Activated CD8-positive, alpha-beta T cell treated with anti-CD3 and anti-CD28 coated beads for 36 hours (primary cell): ENCODE measurements at regions of chr6 and their contacts with region 1.

Region 1: GRCh38 chr6:33276864-33277662 is at the start of gene B3GALT4:
- DNase-seq: peak; percentile 82
- ATAC-seq: peak; percentile 76
- H3K4me3 Mint-ChIP-seq: peak within 1 kb of the TSS; percentile 95
- H3K27ac Mint-ChIP-seq: peak within 1 kb of the TSS; percentile 100
- H3K4me1 Mint-ChIP-seq: peaks cover 38% of the 10 kb centered on the region
- H3K27me3 Mint-ChIP-seq: no peaks in the 10 kb centered on the region
- CTCF ChIP-seq: peak; percentile 44
- total RNA-seq, gene B3GALT4: 3.6 to 4.2 TPM

Region 2: DNA sequence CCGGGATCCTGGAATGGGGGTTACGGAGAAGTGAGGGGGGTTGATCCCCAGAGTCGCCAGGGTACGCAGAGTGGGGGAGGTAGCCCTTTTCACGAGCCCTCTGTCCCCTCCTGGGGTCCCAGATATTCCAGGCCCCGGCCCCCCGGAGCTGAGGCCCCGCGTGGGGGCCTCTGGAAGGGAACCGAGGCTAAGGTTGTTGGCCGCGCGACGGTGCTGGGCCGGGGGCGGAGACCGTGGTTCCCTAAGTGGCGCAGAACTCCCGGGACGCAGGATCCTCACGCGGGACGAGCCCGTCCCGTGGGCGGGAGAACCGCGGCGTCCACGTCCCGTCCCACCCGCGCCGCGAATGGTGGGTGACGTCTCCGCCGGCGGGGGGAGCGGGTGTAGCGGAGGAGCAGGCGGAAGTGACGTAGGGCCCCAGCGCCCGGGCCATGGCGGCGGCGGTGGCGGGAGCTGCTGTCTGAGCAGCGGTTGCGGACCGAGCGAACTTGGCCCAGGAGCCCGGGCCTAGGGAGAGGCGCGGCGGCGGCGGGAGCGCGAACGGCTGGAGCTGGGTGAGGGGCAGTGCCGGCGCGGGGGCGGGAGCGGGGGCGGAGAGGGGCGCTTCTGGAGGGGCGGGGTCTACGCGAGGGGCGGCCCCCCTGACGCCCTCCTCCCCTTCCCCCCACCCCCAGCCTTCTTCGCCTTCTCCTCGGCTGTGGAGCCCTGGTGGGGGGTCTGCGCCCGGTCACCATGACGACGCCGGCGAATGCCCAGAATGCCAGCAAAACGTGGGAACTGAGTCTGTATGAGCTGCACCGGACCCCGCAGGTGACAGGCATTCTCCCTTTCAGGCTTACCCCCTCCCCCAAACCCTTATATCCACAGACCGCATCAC is 68.7 kb before region 1 on chr6 and contains the start of gene RING1:
- CTCF ChIA-PET with region 1: interaction called, 4 read pairs
- POLR2A ChIA-PET with region 1: interaction called, 21 read pairs
- intact Hi-C with region 1: no loop called
- DNase-seq: peak; percentile 89
- ATAC-seq: peak; percentile 24
- H3K4me3 Mint-ChIP-seq: peak within 1 kb of the TSS; percentile 77
- H3K27ac Mint-ChIP-seq: peak within 1 kb of the TSS; percentile 94
- H3K4me1 Mint-ChIP-seq: peaks cover 63% of the 10 kb centered on the region
- H3K27me3 Mint-ChIP-seq: no peaks in the 10 kb centered on the region
- CTCF ChIP-seq: no peak
- total RNA-seq, gene RING1: 26.8 to 27.5 TPM

Region 3: GRCh38 chr6:33288921-33289748 is 12.1 kb after region 1 on chr6 and contains the starts of genes PFDN6 and WDR46:
- CTCF ChIA-PET with region 1: interaction called, 35 read pairs
- POLR2A ChIA-PET with region 1: interaction called, 261 read pairs
- intact Hi-C with region 1: no loop called
- DNase-seq: peak; percentile 91
- ATAC-seq: peak; percentile 98
- H3K4me3 Mint-ChIP-seq: peak within 1 kb of the TSS; percentile 89
- H3K27ac Mint-ChIP-seq: peak within 1 kb of the TSS; percentile 89
- H3K4me1 Mint-ChIP-seq: peaks cover 33% of the 10 kb centered on the region
- H3K27me3 Mint-ChIP-seq: no peaks in the 10 kb centered on the region
- CTCF ChIP-seq: no peak
- total RNA-seq, gene PFDN6: 78.1 to 92.3 TPM
- total RNA-seq, gene WDR46: 64.0 to 72.2 TPM

Region 4: DNA sequence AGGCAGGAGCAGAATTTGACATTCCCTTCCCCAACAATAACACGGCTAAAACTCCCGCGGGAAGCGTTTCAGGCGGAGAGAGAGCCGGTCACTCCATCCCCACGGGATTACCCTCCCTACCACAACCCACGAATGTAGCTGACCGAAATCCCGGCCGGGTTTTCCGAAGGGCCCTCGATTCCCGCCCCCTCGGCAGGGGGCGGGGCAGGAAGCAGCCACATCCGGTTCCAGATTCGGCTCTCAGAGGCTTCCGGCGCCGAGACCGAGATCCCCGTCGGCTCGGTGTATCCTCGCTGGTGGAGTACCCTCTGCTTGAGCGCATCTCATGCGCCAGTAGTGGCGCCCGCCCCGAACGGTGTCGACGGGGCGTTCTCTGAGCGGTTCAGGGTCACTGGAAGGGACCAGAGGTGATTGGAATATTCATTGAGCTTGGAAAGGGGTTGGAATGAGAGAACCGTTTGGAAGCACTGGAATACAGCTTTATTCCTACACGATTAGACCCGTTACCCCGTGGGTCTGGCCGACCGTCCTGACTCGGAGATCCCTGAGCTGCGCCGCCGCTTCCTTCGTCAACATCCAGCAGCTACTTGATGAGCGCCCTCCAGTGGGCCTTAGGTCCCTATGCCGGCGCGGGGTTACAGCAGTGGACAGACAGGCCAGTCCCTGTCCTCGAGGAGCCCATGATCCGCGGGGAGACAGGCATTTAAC is 22.3 kb after region 1 on chr6:
- CTCF ChIA-PET with region 1: interaction called, 11 read pairs
- POLR2A ChIA-PET with region 1: interaction called, 261 read pairs
- intact Hi-C with region 1: no loop called
- DNase-seq: peak; percentile 96
- ATAC-seq: peak; percentile 86
- H3K4me3 Mint-ChIP-seq: peak overlapping the region; percentile 97
- H3K27ac Mint-ChIP-seq: peak overlapping the region; percentile 99
- H3K4me1 Mint-ChIP-seq: peaks cover 33% of the 10 kb centered on the region
- H3K27me3 Mint-ChIP-seq: no peaks in the 10 kb centered on the region
- CTCF ChIP-seq: peak; percentile 74

Region 5: DNA sequence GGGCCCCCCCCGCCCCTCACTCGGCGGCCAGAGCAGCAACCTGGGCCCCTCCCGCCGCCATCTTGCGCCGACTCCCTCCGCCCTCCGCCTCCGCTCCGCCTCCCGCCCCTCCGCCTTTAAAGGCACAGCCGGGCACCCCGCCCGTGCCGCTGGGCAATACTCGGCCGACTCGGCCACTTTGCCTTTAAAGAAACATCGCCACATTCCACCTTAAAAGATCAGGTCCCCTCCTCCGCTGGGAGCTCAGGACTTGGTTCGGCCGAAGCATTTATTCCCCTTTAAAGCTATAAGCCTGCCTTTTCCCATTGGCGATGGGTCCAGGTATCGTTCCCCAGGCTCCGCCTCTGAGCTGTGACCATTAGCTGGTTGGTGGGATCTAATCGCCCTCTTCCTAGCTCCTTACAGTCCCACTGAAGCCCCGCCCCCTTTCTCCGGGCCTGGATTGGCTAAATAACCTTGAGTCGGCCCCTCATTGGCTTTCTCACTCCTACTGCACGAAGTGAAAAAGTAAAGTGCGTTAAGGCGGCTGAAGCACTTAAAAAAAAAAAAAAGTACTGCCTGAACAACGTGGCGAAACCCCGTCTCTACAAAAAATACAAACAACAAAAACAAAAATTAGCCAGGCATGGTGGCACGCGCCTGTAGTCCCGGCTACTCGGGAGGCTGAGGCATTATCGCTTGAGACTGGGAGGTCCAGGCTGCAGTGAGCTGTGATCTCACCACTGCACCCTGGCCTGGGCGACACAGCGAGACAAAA is 40.8 kb after region 1 on chr6 and contains the start of gene ZBTB22:
- CTCF ChIA-PET with region 1: interaction called, 5 read pairs
- POLR2A ChIA-PET with region 1: interaction called, 31 read pairs
- intact Hi-C with region 1: no loop called
- DNase-seq: peak; percentile 100
- ATAC-seq: peak; percentile 67
- H3K4me3 Mint-ChIP-seq: peak within 1 kb of the TSS; percentile 97
- H3K27ac Mint-ChIP-seq: peak within 1 kb of the TSS; percentile 97
- H3K4me1 Mint-ChIP-seq: peaks cover 68% of the 10 kb centered on the region
- H3K27me3 Mint-ChIP-seq: no peaks in the 10 kb centered on the region
- CTCF ChIP-seq: no peak
- total RNA-seq, gene ZBTB22: 7.2 to 7.5 TPM

Region 6: GRCh38 chr6:33344701-33345697 is 67.9 kb after region 1 on chr6:
- CTCF ChIA-PET with region 1: interaction called, 17 read pairs
- POLR2A ChIA-PET with region 1: interaction called, 4 read pairs
- intact Hi-C with region 1: no loop called
- DNase-seq: peak; percentile 83
- ATAC-seq: peak; percentile 68
- H3K4me3 Mint-ChIP-seq: peak overlapping the region; percentile 51
- H3K27ac Mint-ChIP-seq: peak overlapping the region; percentile 75
- H3K4me1 Mint-ChIP-seq: peaks cover 18% of the 10 kb centered on the region
- H3K27me3 Mint-ChIP-seq: no peaks in the 10 kb centered on the region
- CTCF ChIP-seq: peak; percentile 71

Region 7: DNA sequence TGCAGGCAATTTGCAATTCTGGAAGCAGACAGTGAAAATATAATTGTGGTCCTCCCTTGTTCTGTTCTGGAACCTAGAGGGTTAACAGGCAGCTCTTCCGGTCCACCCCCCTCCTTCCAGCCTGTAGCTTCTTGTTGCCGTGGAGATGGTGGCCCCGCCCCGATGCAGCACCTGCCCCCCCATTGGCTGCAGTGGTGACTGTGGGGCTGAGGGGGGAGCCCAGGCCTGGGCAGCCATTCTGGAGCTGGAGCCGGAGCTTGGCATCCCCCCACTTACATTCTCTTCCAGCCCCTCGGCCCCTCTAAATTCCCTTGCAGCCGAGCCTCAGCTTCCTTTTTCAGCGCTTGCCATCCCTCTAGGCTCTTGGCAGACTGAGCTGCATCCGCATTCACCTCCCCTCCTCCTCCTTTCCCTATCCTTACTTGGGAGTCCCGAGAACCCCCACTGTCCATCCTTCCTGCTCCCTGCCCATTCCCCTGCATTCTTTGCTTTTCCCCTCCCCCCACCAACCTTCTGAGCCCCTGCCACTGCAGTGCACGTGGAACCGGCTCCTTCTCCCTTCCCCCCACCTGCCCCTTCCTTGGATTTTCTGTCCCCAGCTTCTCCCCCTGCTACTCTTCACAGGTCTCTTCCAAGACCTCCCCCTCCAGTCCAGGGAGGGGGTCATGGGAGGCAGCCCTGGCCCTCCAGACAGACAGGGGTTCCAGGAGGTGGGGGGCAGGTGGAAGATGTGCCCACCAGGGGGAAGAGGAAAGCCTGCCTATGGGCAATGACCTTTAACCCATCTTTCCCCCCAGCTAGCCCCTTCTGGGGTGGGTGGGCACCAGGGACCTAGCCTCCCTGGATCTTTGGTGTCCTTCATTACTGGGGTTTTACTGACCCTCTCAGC is 154.2 kb after region 1 on chr6:
- CTCF ChIA-PET with region 1: interaction called, 8 read pairs
- POLR2A ChIA-PET with region 1: interaction called, 14 read pairs
- intact Hi-C with region 1: no loop called
- DNase-seq: peak; percentile 93
- ATAC-seq: peak; percentile 70
- H3K4me3 Mint-ChIP-seq: peak overlapping the region; percentile 88
- H3K27ac Mint-ChIP-seq: peak overlapping the region; percentile 91
- H3K4me1 Mint-ChIP-seq: peaks cover 60% of the 10 kb centered on the region
- H3K27me3 Mint-ChIP-seq: no peaks in the 10 kb centered on the region
- CTCF ChIP-seq: no peak